Endothelial cell of umbilical vein (primary cell): ENCODE measurements at regions of chr15 and their contacts with region 1.

Region 1: GRCh38 chr15:48963524-48964113 is at the start of gene SHC4:
- DNase-seq: peak; percentile 89
- H3K4me3 ChIP-seq: peak within 1 kb of the TSS; percentile 17 to 76 (median 40)
- H3K27ac ChIP-seq: no peak within 1 kb of the TSS
- H3K4me1 ChIP-seq: peaks cover 8% of the 10 kb centered on the region
- H3K27me3 ChIP-seq: peaks cover 13 to 21% of the 10 kb centered on the region in 2 experiments
- CTCF ChIP-seq: no peak
- POLR2A ChIP-seq: no peak
- total RNA-seq, gene SHC4: 0.20 TPM in 1 of 2 replicates, not detected in the other

Region 2: DNA sequence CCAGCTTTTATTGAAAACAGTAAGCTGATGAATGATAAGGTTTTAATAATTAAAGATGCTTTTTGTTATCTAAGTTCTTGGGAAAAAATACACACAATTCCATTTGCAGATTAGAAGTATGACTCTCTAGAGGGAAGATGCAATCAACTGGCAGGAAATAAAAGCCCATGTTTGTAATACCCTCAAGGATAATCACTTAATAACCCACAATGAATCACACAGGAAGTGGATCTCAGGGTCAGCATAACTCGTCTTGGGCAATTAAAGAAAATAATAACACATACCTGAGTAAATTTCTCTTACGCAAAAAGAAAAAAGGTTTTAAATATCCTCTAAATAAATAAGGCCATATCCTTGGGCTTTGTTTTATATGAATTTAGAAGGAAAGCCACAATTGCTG is 95.1 kb before region 1 on chr15:
- CTCF ChIA-PET with region 1: no interaction called
- POLR2A ChIA-PET with region 1: no interaction called
- dilution Hi-C with region 1: no loop called
- intact Hi-C with region 1: loop called (anchors 2 kb)
- DNase-seq: peak; percentile 35
- H3K4me3 ChIP-seq: no peak overlapping the region
- H3K27ac ChIP-seq: no peak overlapping the region
- H3K4me1 ChIP-seq: peaks cover 12% of the 10 kb centered on the region
- H3K27me3 ChIP-seq: peaks cover 4 to 11% of the 10 kb centered on the region in 2 experiments
- CTCF ChIP-seq: no peak
- POLR2A ChIP-seq: no peak

Region 3: DNA sequence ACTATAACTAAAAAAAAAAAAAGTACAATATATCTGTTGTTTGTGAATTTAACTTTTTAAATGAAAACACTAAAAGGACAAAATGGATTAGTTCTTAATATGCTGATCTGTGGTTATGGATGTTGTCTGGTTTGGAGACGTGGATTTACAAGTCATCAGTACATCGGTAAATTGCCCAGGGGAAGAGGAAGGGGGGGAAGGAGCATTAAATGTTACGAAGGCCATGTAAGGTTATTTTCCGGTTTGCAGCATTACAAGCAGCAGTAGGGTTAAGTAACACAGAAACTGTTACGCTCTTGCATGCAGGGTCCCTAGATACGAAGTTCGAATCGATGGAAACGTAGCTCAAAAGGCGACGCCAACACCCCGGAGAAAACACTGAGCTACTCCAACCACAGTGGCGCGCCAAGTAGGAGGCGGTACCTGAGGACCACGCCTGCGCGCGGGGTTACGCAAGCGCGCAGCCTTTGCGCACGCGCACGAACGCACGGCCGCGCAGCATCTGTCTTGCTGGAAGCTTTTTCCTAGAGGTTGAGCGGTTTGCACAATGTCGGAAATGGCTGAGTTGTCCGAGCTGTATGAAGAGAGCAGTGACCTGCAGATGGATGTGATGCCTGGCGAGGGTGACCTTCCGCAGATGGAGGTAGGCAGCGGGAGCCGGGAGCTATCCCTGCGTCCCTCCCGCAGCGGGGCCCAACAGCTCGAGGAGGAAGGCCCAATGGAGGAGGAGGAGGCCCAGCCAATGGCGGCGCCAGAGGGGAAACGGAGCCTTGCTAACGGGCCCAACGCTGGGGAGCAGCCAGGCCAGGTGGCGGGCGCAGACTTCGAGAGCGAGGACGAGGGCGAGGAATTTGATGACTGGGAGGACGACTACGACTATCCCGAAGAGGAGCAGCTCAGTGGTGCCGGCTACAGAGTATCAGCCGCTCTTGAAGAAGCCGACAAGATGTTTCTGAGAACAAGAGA is 85.7 kb before region 1 on chr15 and contains the start of gene EID1:
- CTCF ChIA-PET with region 1: interaction called, 7 read pairs
- POLR2A ChIA-PET with region 1: interaction called, 5 read pairs
- dilution Hi-C with region 1: no loop called
- intact Hi-C with region 1: loop called (anchors 2 kb)
- DNase-seq: peak; percentile 97
- H3K4me3 ChIP-seq: peak within 1 kb of the TSS; percentile 25 to 86 (median 67)
- H3K27ac ChIP-seq: peak within 1 kb of the TSS; percentile 29
- H3K4me1 ChIP-seq: peaks cover 13% of the 10 kb centered on the region
- H3K27me3 ChIP-seq: peaks cover under 1 to 7% of the 10 kb centered on the region in 2 experiments
- CTCF ChIP-seq: no peak
- POLR2A ChIP-seq: peak; percentile 86
- total RNA-seq, gene EID1: 146 and 153 TPM in 2 replicates

Region 4: DNA sequence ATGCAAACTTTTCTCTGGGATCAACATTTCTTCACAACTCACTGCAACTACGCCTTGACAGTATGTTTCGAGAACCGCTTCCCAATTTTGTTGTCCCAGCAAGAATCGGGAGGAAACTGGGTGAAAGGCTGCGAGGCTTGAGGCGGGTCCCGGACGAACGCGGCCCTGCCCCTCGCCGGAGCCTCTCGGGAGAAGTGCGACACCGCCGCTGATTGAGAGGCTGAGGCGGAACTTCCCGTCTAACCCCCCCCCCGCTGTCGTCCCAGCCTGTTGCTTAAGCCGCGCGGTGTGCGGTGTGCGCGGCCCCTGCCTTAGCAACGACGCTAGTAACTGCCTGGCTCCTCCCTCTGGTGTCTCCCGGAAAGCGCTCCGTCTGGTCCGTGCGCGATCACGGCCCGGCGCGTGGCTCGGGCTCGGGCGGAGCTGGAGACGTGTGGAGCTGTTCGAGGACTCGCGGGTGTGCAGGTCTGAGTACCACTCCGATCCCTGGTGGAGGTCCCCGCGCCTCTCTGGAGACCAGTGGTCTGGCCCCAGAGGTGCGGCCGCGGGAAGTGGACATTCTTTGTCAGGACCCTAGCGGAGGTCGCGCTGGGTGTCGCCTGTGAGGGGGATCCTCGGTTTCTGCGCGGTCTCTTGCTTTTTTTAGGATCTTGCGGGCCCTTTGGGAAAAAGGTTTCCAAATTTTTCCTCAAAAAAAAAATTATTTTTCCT is 657.2 kb after region 1 on chr15 and contains the starts of genes DTWD1 and FAM227B:
- CTCF ChIA-PET with region 1: no interaction called
- POLR2A ChIA-PET with region 1: no interaction called
- dilution Hi-C with region 1: no loop called
- intact Hi-C with region 1: loop called (anchors 5 kb)
- DNase-seq: peak; percentile 98
- H3K4me3 ChIP-seq: peak within 1 kb of the TSS; percentile 79 to 95 (median 91)
- H3K27ac ChIP-seq: peak within 1 kb of the TSS; percentile 64
- H3K4me1 ChIP-seq: peaks cover 11% of the 10 kb centered on the region
- H3K27me3 ChIP-seq: no peaks in the 10 kb centered on the region
- CTCF ChIP-seq: no peak
- POLR2A ChIP-seq: peak; percentile 88
- total RNA-seq, gene DTWD1: 18.7 and 20.1 TPM in 2 replicates
- total RNA-seq, gene FAM227B: 1.5 and 1.8 TPM in 2 replicates